Esophagus squamous epithelium (tissue), 5 donors: ENCODE measurements at regions of chr1 and their contacts with region 1.

Region 1: DNA sequence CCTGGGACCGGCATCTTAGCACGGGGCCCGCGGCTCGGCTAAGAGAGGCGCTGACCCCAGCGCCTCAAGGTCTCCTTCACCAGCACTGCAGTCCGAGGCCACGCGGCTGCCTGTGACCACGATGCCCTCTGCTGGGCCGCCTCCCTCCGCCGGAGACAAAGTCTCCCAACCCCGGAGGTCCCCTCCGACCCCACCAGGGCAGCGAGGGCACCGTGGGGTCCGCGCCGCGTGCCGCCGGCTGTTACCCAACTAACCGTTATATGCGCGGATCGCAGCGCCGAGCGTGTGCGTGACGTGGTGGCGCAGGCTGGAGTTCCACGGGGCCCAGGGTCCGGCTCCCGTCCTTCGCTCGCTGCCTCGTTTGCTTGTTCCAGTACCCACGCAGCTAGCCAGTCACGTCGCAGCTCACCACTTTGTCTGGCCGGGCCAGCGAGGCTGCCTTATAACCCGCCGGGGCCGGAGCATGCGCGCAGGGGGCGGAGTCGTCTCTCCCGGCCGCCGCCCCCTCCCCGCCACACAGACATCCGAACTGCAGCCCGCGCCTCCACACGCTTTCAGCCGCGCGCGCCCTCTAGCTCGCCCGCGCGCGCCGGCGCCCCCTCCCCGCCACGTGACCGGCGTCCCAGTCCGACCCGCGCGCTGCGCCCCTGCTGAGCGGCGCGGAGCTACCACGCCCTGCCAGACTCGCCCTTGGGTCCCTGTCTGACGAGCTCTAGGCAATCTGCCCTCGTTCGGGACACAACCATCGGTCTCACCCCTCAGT is at the start of gene SLC16A1:
- DNase-seq: peak; percentile 57
- H3K4me3 ChIP-seq: peak within 1 kb of the TSS; percentile 69 to 98 (median 78)
- H3K27ac ChIP-seq: peak within 1 kb of the TSS; percentile 85 to 96 (median 94)
- H3K4me1 ChIP-seq: peaks cover 13 to 66% (median 39%) of the 10 kb centered on the region in 3 donors
- H3K27me3 ChIP-seq: no peaks in the 10 kb centered on the region
- CTCF ChIP-seq: peak in 3 of 6 experiments; percentile 12 to 41 (median 13)
- POLR2A ChIP-seq: peak in 3 of 4 donors; percentile 73 to 95 (median 91)
- total RNA-seq, gene SLC16A1: 19.1 to 80.3 (median 57.9) TPM

Region 2: GRCh38 chr1:112882271-112882744 is 73.7 kb before region 1 on chr1:
- intact Hi-C with region 1: loop called (anchors 10 kb)
- DNase-seq: no peak
- H3K4me3 ChIP-seq: no peak overlapping the region
- H3K27ac ChIP-seq: peak overlapping the region in 1 of 4 donors; percentile 0
- H3K4me1 ChIP-seq: peaks cover 5 to 19% (median 15%) of the 10 kb centered on the region in 3 donors
- H3K27me3 ChIP-seq: no peaks in the 10 kb centered on the region
- CTCF ChIP-seq: no peak
- POLR2A ChIP-seq: no peak

Region 3: GRCh38 chr1:112925015-112925414 is 30.9 kb before region 1 on chr1:
- intact Hi-C with region 1: no loop called
- DNase-seq: no peak
- H3K4me3 ChIP-seq: no peak overlapping the region
- H3K27ac ChIP-seq: no peak overlapping the region
- H3K4me1 ChIP-seq: peaks cover 0 to 12% (median 0%) of the 10 kb centered on the region in 3 donors
- H3K27me3 ChIP-seq: no peaks in the 10 kb centered on the region
- CTCF ChIP-seq: no peak
- POLR2A ChIP-seq: no peak